ENCODE measurements at regions of chr15 and their contacts with region 1.

Region 1: DNA sequence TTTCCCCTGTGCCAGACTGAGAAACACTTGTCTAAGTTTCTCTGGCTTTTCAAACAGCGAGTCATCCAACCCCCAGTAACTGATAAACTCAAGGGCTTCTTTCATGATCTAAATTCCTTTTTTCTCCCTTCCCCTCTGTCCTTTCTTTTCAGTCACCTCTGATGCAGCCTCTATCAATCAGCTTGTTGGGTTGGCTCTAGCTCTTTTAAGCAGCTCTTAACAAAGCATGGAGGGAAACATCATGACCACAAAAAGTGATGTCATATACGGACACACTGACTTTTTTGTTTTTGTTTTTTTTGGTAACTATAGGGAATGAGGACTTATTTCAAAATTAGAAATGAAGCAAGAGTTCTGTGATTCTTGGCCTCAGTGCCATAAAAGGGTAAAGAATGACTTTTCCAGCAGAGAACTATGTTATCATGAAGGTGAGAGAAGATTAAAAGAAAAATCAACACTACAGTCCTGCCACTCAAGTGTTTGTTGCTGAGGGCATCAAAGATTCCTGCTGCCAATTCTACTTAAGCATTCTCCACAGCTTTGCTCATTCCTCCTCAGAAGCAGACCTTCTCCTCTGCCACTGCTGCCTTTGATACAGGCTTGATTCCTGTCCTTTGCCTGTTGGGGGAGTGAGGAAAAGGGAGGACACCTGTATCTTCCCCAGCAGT is 457.0 kb upstream of the ONECUT1 start:
- DNase-seq: no peak

Region 2: DNA sequence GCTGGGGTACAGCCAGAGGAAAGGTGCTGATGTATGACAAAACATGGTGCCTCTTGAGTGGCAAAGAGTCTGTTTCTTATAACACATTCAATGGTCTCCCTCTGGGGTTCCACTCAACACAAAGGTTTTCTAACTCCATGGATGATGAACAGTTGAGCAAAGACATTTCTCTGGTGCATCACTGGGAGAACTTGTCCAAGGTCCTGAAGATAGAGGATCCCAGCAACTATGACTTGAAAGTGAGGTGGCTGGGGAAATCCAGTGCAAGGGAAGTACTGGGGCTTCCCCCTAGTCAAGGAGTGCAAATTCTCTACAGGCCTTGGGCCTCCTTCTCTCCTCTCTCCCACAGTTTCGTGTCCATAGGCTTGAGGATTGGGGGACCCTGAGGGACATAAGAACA is 81.2 kb after region 1 on chr15:
- in situ Hi-C with region 1: loop called (anchors 25 kb)
- DNase-seq: no peak

Region 3: GRCh38 chr15:53416219-53416940 is 169.2 kb after region 1 on chr15:
- in situ Hi-C with region 1: no loop called
- DNase-seq: no peak

Measured in KBM-7 (cell line).